Activated CD4-positive, alpha-beta T cell treated with anti-CD3 and anti-CD28 coated beads for 36 hours (primary cell): ENCODE measurements at regions of chr16 and their contacts with region 1.

Region 1: GRCh38 chr16:4307215-4308037 is 8.4 kb upstream of the GLIS2 start:
- DNase-seq: peak; percentile 98
- ATAC-seq: peak; percentile 92
- H3K4me3 Mint-ChIP-seq: peak overlapping the region; percentile 96
- H3K27ac Mint-ChIP-seq: peak overlapping the region; percentile 99
- H3K4me1 Mint-ChIP-seq: peaks cover 30% of the 10 kb centered on the region
- H3K27me3 Mint-ChIP-seq: no peaks in the 10 kb centered on the region

Region 2: DNA sequence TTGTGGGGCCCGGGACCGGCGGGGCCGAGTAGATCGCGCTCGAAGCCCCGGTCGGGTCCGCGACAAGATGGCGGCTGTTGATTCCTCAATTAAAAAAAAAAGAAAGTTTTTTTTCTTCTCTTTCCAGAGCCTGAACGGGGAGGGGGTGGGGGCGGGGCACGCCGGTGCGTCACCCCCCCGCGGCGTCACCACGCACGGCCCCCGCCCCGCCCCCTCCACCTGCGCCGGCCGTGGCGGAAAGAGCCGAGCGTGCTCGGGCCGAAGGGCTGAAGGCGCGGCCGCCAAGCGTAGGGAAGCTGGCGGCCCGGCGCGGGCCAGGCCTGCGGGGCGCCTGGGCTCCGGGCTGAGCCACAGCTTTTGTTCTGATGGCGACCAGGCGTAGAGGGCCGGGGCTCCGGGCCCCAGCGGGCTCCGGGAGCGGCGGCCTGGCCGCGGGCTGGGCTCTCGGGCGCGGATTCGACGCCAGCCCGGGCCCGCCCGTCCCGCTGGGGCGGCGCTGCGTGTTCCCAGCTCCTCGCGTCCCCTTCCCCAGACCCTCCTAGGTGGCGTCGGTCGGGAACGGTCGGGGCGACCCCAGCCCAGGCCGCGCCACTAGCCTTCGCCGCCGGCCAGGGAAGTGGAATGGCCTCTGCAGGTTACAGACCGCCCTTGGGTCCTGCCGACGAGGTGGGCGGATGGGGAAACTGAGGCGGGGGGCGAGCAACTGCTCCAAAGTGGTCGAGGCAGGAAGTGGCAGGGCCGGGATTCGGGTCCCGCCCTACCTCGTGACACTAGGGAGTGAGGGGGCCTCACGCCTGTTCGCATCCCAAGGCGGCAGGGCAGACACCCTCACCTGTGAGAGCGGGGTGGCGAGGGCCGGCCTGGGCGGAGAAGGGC is 426.6 kb before region 1 on chr16 and contains the start of gene CREBBP:
- CTCF ChIA-PET with region 1: interaction called, 3 read pairs
- POLR2A ChIA-PET with region 1: no interaction called
- intact Hi-C with region 1: loop called in 1 of 2 experiments (anchors 1 kb)
- DNase-seq: peak; percentile 93
- ATAC-seq: peak; percentile 89
- H3K4me3 Mint-ChIP-seq: peak within 1 kb of the TSS; percentile 79
- H3K27ac Mint-ChIP-seq: peak within 1 kb of the TSS; percentile 69
- H3K4me1 Mint-ChIP-seq: peaks cover 36% of the 10 kb centered on the region
- H3K27me3 Mint-ChIP-seq: peaks cover 6% of the 10 kb centered on the region
- total RNA-seq, gene CREBBP: 28.1 to 37.4 TPM

Region 3: GRCh38 chr16:4140652-4141051 is 166.8 kb before region 1 on chr16:
- CTCF ChIA-PET with region 1: no interaction called
- POLR2A ChIA-PET with region 1: no interaction called
- intact Hi-C with region 1: no loop called
- DNase-seq: no peak
- ATAC-seq: no peak
- H3K4me3 Mint-ChIP-seq: no peak overlapping the region
- H3K27ac Mint-ChIP-seq: peak overlapping the region; percentile 4
- H3K4me1 Mint-ChIP-seq: no peaks in the 10 kb centered on the region
- H3K27me3 Mint-ChIP-seq: peaks cover 5% of the 10 kb centered on the region

Region 4: GRCh38 chr16:4271176-4272066 is 36.0 kb before region 1 on chr16:
- CTCF ChIA-PET with region 1: interaction called, 7 read pairs
- POLR2A ChIA-PET with region 1: interaction called, 3 read pairs
- intact Hi-C with region 1: loop called (anchors 1 kb)
- DNase-seq: peak; percentile 96
- ATAC-seq: peak; percentile 85
- H3K4me3 Mint-ChIP-seq: peak overlapping the region; percentile 84
- H3K27ac Mint-ChIP-seq: peak overlapping the region; percentile 94
- H3K4me1 Mint-ChIP-seq: peaks cover 12% of the 10 kb centered on the region
- H3K27me3 Mint-ChIP-seq: no peaks in the 10 kb centered on the region

Region 5: DNA sequence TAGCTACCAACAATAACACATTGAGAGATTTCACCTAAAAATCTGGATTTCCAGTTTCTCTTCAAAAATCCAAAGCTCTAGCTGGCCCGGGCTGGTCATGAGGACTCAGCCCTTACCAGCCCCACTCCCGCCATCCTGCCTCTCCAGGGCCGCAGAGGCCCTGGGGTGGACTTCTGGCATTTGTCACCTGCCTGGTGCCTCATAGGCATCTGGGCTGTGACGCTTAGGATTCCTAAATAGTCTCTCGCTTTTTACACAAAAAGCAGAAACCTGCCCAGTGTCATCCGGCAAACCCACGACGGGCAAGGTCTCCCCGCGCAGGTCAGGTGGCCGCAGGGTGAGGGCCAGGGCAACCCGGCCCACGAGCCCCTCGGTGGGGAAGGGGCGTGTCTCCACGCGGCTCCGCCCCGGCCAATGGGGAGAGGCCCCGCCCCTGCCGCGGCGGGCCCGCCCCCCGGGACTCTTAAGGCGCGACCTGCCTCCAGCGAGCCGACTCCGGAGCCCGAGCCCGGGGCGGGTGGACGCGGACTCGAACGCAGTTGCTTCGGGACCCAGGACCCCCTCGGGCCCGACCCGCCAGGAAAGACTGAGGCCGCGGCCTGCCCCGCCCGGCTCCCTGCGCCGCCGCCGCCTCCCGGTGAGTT is 64.1 kb after region 1 on chr16 and contains the start of gene VASN:
- CTCF ChIA-PET with region 1: no interaction called
- POLR2A ChIA-PET with region 1: no interaction called
- intact Hi-C with region 1: loop called in 1 of 2 experiments (anchors 2 kb)
- DNase-seq: peak; percentile 81
- ATAC-seq: peak; percentile 94
- H3K4me3 Mint-ChIP-seq: peak within 1 kb of the TSS; percentile 59
- H3K27ac Mint-ChIP-seq: no peak within 1 kb of the TSS
- H3K4me1 Mint-ChIP-seq: peaks cover 12% of the 10 kb centered on the region
- H3K27me3 Mint-ChIP-seq: no peaks in the 10 kb centered on the region
- total RNA-seq, gene VASN: not detected

Region 6: DNA sequence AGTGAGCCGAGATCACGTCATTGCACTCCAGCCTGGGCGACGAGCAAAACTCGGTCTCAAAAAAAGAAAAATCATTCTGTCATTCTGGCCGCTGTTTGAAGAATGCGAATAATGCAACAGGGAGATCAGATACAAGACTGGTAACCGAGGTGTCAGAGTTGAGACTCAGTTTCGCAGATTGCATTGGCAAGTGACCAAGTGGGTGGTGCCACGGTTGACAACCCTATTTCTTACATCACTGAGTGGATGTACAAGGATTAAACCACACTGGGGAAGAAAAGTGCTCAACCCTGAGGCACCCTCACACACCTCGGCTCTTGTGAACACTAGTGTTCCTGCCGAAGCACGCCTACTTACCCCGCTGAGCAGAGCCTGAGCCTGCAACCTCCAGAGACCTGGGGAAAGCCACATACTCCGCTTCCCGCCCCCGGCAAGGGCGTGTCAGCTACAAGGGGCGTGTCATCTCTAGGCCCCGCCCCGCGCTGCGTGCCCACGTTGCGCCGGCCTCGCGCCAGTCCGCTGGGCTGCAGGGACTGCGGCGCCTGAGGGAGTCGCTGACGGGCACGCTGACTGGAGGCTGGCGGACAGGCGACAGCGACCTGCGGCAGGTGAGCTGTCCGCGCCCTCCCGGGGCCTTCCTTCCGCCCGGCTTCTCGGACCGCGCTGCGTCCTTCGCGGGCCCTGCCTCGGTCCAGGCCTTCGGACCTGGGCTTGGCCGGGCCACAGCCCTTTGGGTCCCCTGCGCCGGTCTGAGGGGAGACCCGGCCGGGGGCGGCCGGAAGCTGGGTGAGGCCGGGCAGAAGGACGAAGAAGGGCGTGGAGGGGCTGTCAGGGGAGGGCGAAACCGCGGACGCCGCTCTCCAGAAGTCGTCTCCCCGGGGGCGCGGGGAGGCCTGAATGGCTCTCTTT is 168.7 kb after region 1 on chr16 and contains the start of gene HMOX2:
- CTCF ChIA-PET with region 1: no interaction called
- POLR2A ChIA-PET with region 1: no interaction called
- intact Hi-C with region 1: loop called in 1 of 2 experiments (anchors 1 kb)
- DNase-seq: peak; percentile 96
- ATAC-seq: peak; percentile 85
- H3K4me3 Mint-ChIP-seq: peak within 1 kb of the TSS; percentile 88
- H3K27ac Mint-ChIP-seq: peak within 1 kb of the TSS; percentile 85
- H3K4me1 Mint-ChIP-seq: peaks cover 43% of the 10 kb centered on the region
- H3K27me3 Mint-ChIP-seq: no peaks in the 10 kb centered on the region
- total RNA-seq, gene HMOX2: 67.7 to 80.2 TPM

Region 7: DNA sequence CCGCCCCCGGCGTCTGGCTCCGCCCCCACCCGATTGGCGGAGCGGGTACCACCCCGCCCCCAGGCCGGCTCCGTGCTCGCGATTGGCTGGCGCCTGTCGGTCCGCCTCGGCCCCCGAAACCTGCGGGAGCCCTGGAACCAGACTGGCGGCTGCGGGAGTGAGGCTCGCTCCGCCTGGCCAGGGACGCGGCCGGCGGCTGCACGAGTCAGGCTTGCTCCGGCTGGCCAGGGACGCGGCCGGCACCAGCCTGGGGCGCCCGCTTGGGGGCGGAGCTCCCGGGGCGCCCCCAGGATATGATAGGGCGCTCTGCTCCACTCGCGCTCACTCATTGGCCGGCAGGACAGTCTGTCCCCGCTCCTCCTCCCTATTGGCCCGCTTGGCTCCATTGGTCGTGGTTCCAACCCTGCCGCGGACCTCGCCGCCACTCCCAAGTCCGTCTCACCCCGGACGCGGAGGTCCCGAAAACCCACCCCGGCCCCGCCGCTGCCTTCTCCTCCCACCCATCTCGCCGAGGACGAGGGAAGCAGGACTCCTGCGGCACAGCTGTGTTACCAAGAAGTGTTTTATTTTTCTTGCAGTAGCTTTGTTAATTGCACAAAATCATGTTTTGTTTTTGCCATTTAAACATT is 495.3 kb after region 1 on chr16:
- CTCF ChIA-PET with region 1: no interaction called
- POLR2A ChIA-PET with region 1: no interaction called
- intact Hi-C with region 1: loop called (anchors 1 to 5 kb)
- DNase-seq: peak; percentile 92
- ATAC-seq: peak; percentile 98
- H3K4me3 Mint-ChIP-seq: peak overlapping the region; percentile 74
- H3K27ac Mint-ChIP-seq: peak overlapping the region; percentile 58
- H3K4me1 Mint-ChIP-seq: peaks cover 14% of the 10 kb centered on the region
- H3K27me3 Mint-ChIP-seq: no peaks in the 10 kb centered on the region